ENCODE measurements at regions of chr9 and their contacts with region 1.

Region 1: DNA sequence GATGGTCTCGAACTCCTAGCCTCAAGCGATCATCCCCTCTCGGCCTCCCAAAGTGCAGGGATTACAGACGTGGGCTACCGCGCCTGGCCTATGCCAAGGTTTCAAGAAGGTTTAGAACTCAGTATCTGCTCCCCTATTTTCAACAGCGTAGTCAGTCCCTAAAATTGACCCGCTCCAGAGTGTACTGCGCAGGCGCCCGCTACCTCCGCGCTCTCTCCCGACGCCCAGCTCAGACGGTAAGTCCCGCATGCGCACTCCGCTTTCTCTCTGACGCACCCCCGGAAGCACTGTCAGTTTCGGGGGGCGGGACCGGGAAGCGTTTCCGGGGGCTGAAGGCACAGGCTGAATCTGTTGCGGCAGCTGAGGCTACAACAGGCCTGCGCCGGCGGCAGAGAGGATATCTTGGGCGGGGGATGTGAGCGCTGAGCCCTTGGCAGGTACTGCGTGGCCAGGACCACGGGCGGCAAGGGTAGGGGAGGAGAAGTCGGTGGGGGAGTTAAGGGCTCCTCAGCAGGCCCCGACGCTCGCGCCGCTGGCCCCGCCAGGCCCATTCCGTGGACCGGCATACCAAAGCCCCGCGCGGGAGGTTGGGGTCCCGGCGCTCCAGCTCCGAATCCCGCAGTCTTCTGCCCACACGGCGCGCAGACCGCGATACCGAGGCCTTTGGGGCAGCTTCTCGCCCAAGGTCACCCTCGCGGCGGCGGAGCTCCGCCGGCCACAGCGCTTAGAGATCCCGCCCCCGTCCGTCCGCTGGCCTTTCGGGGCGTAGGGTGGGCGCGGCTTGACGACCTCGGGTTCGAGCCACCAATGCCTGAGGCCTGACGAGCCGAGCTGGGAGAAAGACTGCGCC is at the start of gene ZBTB43:
- DNase-seq: peak; percentile 96 to 98
- ATAC-seq: peak; percentile 63 to 69
- H3K4me3 ChIP-seq: peak within 1 kb of the TSS; percentile 75 to 98 (median 90)
- H3K27ac ChIP-seq: peak within 1 kb of the TSS; percentile 88 to 100 (median 98)
- H3K4me1 ChIP-seq: peaks cover 33 to 45% of the 10 kb centered on the region in 2 donors
- H3K27me3 ChIP-seq: no peaks in the 10 kb centered on the region
- CTCF ChIP-seq: no peak
- POLR2A ChIP-seq: peak; percentile 98
- total RNA-seq, gene ZBTB43: 44.9 to 65.2 (median 60.0) TPM

Region 2: GRCh38 chr9:126860077-126860756 is 55.3 kb after region 1 on chr9 and contains the start of gene ZBTB34:
- in situ Hi-C with region 1: no loop called
- intact Hi-C with region 1: loop called (anchors 5 kb)
- DNase-seq: peak; percentile 40 to 54
- ATAC-seq: peak; percentile 72 to 83
- H3K4me3 ChIP-seq: peak within 1 kb of the TSS; percentile 87 to 95 (median 90)
- H3K27ac ChIP-seq: peak within 1 kb of the TSS; percentile 95 to 98 (median 98)
- H3K4me1 ChIP-seq: peaks cover 40 to 44% of the 10 kb centered on the region in 2 donors
- H3K27me3 ChIP-seq: no peaks in the 10 kb centered on the region
- CTCF ChIP-seq: peak; percentile 99 to 100 (median 100)
- POLR2A ChIP-seq: no peak
- total RNA-seq, gene ZBTB34: 6.2 to 8.7 (median 6.9) TPM

Region 3: DNA sequence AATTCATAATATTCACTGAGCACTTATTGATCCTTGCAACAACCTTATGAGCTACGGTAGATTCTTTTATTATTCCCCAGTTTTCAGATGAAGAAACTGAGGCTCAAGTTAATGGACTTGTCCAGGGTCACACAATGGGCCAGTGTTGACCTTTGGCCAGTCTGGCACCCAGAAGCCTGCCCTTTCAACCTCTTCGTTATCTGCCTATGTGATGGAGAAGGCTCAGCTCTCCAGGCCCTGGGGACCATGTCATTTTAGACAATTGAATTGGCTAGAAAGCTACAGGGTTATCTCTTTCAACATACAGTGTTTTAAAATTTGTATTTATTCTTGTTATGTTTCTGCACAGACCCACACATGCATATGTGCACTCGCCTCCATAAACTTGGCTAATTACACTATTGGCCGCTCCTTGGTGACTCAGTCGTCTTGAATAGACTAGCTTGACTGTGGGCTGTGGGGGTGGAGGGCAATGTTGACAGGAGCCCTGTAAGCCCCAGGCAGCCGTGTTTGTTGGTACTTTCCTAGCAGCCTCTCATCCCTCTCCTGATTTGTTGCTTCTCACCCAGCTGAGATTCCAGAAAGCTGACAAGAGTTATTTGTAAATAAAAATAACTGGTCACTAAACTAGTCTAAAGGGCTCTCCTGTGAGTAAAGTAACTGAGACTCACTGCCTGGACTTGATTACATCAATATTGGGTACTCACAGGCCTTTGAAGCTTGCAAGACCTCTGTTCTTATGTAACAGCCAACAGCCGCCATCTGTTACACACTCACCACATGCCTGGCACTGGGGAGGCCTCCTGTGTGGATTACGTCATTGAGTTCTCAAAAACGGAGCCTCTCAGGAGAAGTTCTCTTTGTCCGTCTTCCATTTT is 326.0 kb after region 1 on chr9:
- in situ Hi-C with region 1: no loop called
- intact Hi-C with region 1: loop called (anchors 10 kb)
- DNase-seq: peak; percentile 88 to 95
- ATAC-seq: peak; percentile 59 to 70
- H3K4me3 ChIP-seq: no peak overlapping the region
- H3K27ac ChIP-seq: peak overlapping the region; percentile 92 to 98 (median 94)
- H3K4me1 ChIP-seq: peaks cover 74 to 76% of the 10 kb centered on the region in 2 donors
- H3K27me3 ChIP-seq: no peaks in the 10 kb centered on the region
- CTCF ChIP-seq: no peak
- POLR2A ChIP-seq: peak in 1 of 2 donors; percentile 30

Measured in gastrocnemius medialis (tissue), 4 donors.